ENCODE measurements at regions of chr5 and their contacts with region 1.

Region 1: GRCh38 chr5:87780831-87781760 is 368.4 kb upstream of the CCNH start:
- DNase-seq: peak; percentile 78
- ATAC-seq: peak; percentile 99
- H3K4me3 ChIP-seq: no peak overlapping the region
- H3K27ac ChIP-seq: no peak overlapping the region
- H3K4me1 ChIP-seq: no peaks in the 10 kb centered on the region
- H3K27me3 ChIP-seq: peaks cover 25% of the 10 kb centered on the region
- CTCF ChIP-seq: peak; percentile 93

Region 2: DNA sequence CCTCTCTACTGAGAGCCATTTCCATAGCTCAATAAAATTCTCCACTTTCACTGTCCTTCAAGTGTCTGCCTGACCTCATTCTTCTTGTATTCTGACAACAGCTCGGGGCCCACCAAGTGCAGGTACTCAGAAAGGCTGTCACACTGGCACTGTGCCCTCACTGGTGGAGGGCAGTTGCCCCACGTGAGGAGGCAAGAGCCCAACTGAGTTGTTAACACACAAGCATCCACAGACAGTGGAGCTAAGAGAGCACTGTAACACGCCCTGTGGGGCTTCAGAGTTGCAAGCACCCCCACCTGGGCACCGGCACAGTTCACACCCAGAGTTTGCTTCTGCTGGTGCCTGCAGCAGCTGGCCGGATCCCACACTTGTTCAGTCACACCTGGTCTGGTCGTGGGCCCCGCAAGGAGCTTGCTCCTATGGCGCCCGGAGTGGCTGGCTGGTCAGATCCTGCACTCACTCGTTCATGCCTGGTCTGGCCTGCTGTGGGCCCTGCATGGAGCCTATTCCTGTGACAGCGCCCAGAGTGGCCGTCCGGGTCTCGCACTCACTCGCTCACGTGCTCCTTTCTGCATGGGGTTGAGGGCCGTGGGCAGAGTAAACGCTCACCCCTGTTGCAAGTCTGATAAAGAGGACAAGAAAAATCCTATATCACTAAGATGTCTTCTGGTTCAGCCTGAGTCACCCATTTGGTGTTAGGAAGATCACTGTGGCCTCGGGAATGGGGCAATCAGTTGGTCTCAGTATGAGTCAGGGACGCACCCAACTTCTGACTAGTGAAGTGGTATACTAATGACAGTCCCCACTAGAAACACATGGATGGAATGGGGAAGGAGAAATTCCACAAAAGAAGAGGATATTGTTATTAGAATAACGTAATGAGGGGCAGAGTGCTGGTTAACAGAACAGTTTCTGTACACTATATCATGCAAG is 281.4 kb before region 1 on chr5:
- intact Hi-C with region 1: no loop called
- DNase-seq: no peak
- ATAC-seq: peak; percentile 16
- H3K4me3 ChIP-seq: no peak overlapping the region
- H3K27ac ChIP-seq: no peak overlapping the region
- H3K4me1 ChIP-seq: no peaks in the 10 kb centered on the region
- H3K27me3 ChIP-seq: no peaks in the 10 kb centered on the region
- CTCF ChIP-seq: no peak

Region 3: DNA sequence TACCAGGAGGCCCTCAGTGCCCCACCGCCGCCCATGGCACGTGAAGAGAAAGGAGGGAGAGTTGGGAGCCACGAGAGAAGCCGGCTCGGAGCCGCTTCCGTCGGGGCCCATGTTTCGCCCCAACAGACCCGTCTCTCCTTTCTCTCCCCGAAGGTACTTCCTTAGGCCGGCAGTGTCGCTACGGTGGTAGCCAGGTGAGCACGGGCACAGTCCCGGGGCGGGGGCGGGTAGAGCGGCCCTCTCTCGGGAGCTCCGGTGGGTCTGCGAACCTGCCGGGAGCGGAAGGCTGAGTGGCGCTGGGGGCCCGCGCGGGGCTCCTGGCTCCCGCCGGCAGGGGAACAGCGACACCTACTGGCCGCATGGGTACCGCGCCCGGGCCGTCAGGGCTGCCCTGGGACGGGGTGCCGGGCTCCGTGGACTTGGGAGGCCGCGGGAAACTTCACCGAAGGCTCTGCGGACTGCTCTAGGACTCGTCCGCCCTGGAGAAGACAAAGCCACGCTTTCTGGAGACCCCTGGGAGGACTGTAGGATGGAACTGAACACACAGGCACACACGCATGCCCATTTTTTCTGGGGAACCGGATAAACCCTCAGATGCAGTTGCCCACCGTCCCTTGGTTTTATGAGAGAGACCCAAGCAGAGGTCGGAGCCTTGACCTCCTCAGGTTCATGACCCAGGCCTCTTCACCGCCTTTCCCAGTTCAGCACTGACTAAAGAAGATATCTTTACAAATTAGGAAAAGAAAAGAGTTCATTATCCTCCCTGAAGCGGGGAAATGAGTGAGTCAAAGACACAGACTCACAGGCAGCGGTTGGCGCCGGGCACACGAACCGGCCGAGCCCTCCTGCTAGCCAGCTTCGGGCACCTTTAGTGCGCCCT is 899.4 kb after region 1 on chr5:
- intact Hi-C with region 1: loop called (anchors 5 kb)
- DNase-seq: peak; percentile 86
- ATAC-seq: peak; percentile 96
- H3K4me3 ChIP-seq: peak overlapping the region; percentile 44
- H3K27ac ChIP-seq: no peak overlapping the region
- H3K4me1 ChIP-seq: peaks cover 18% of the 10 kb centered on the region
- H3K27me3 ChIP-seq: peaks cover 98% of the 10 kb centered on the region
- CTCF ChIP-seq: peak; percentile 98

Measured in upper lobe of right lung (tissue), 1 donor.